ENCODE measurements at regions of chr13 and their contacts with region 1.

Region 1: DNA sequence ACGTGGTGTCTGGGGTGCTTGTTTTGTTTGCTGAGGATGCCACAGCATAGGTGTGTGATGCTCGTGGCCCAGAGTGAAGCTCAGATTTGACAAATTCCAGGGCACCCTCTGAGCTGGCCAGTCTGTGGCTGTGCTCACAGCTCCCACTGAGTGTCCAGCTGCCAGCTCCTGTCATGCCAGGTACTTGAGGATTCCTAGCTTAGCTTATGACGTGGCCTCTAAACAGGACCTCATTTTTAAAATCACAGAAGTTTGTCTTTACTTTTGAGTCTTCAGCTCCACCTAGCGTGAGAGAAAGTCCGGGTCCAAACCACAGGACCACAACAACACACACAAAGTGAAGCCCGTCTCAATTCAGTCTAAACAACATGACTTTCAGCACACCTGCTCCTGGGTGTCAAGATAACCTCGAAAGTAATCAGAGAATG is 117.3 kb downstream of the RAB20 start:
- DNase-seq: no peak
- ATAC-seq: peak; percentile 74
- H3K4me3 ChIP-seq: peak overlapping the region; percentile 30; the same call in 1 of the 2 replicates
- H3K27ac ChIP-seq: peak overlapping the region; percentile 45
- H3K4me1 ChIP-seq: peaks cover 41% of the 10 kb centered on the region
- H3K27me3 ChIP-seq: no peaks in the 10 kb centered on the region
- CTCF ChIP-seq: peak; percentile 44 to 60 (median 54)
- EP300 ChIP-seq: peak in 1 of 2 experiments; percentile 30; a peak in 1 of 4 replicates
- POLR2A ChIP-seq: no peak
- RAD21 ChIP-seq: peak; percentile 81

Region 2: GRCh38 chr13:109809216-109809932 is 634.9 kb before region 1 on chr13:
- CTCF ChIA-PET with region 1: no interaction called
- POLR2A ChIA-PET with region 1: no interaction called
- RAD21 ChIA-PET with region 1: no interaction called
- SMC1A ChIA-PET with region 1: no interaction called
- in situ Hi-C with region 1: no loop called
- intact Hi-C with region 1: no loop called
- DNase-seq: no peak
- ATAC-seq: no peak
- H3K4me3 ChIP-seq: no peak overlapping the region
- H3K27ac ChIP-seq: no peak overlapping the region
- H3K4me1 ChIP-seq: no peaks in the 10 kb centered on the region
- H3K27me3 ChIP-seq: no peaks in the 10 kb centered on the region
- CTCF ChIP-seq: no peak
- EP300 ChIP-seq: no peak
- POLR2A ChIP-seq: no peak
- RAD21 ChIP-seq: no peak

Region 3: GRCh38 chr13:110218581-110219201 is 225.5 kb before region 1 on chr13:
- CTCF ChIA-PET with region 1: interaction called, 138 read pairs
- POLR2A ChIA-PET with region 1: interaction called, 6 read pairs
- RAD21 ChIA-PET with region 1: interaction called, 66 read pairs
- SMC1A ChIA-PET with region 1: interaction called, 91 read pairs
- in situ Hi-C with region 1: loop called (anchors 5 kb)
- intact Hi-C with region 1: loop called (anchors 1 kb)
- DNase-seq: no peak
- ATAC-seq: no peak
- H3K4me3 ChIP-seq: no peak overlapping the region
- H3K27ac ChIP-seq: no peak overlapping the region
- H3K4me1 ChIP-seq: no peaks in the 10 kb centered on the region
- H3K27me3 ChIP-seq: peaks cover 0 to 3% of the 10 kb centered on the region in 2 experiments; a peak in 2 of 4 replicates
- CTCF ChIP-seq: no peak
- EP300 ChIP-seq: no peak
- POLR2A ChIP-seq: no peak
- RAD21 ChIP-seq: no peak

Region 4: DNA sequence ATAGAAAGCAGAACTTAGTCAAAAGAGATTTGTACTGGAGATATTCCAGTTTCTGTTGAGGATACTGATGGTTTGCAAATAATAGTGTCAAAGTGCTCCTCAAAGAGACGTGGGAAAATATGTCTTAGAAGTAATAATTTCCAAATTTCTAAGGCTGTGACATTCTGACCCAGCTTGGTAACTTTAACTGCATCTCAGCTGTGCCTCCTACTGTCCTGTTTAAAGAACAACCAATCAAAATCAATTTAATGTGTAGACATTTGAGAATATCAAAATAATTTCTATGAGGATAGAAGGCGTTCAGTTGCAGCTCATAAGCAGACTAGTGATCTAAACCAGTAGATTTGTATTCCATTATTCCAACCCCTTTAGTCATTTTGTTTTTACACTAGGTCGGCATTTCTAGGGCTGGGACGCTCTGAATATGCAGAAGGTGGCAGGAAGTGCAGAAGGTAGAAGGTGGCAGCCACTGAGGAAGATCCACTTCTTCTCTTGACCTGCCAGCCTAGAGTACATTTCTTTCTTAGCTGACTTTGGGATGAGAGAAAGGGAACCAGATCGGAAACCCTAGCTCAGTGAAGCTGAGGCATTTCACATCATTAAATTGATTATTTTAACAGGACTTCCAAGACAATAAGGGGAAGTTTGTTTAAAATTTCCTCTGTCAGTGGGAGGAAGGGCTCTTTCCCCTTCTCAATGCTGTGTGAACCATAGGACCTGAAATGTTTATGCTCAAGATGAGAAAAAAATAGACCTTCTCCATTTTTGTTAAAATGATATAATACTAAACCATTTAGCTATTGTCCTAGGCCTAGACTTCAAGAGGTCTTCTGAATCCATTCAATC is 204.7 kb before region 1 on chr13:
- CTCF ChIA-PET with region 1: interaction called, 15 read pairs
- POLR2A ChIA-PET with region 1: no interaction called
- RAD21 ChIA-PET with region 1: no interaction called
- SMC1A ChIA-PET with region 1: interaction called, 5 read pairs
- in situ Hi-C with region 1: no loop called
- intact Hi-C with region 1: no loop called
- DNase-seq: no peak
- ATAC-seq: no peak
- H3K4me3 ChIP-seq: no peak overlapping the region
- H3K27ac ChIP-seq: no peak overlapping the region
- H3K4me1 ChIP-seq: no peaks in the 10 kb centered on the region
- H3K27me3 ChIP-seq: peaks cover 4 to 5% of the 10 kb centered on the region in 2 experiments; a peak in 2 of 4 replicates
- CTCF ChIP-seq: no peak
- EP300 ChIP-seq: no peak
- POLR2A ChIP-seq: no peak
- RAD21 ChIP-seq: no peak

Region 5: GRCh38 chr13:110371550-110372465 is 72.4 kb before region 1 on chr13:
- CTCF ChIA-PET with region 1: interaction called, 7 read pairs
- POLR2A ChIA-PET with region 1: no interaction called
- RAD21 ChIA-PET with region 1: interaction called, 20 read pairs
- SMC1A ChIA-PET with region 1: interaction called, 4 read pairs
- in situ Hi-C with region 1: no loop called
- intact Hi-C with region 1: no loop called
- DNase-seq: peak; percentile 40
- ATAC-seq: peak; percentile 86
- H3K4me3 ChIP-seq: no peak overlapping the region
- H3K27ac ChIP-seq: no peak overlapping the region
- H3K4me1 ChIP-seq: no peaks in the 10 kb centered on the region
- H3K27me3 ChIP-seq: no peaks in the 10 kb centered on the region
- CTCF ChIP-seq: no peak
- EP300 ChIP-seq: peak; percentile 10 to 54; a peak in 2 of 4 replicates
- POLR2A ChIP-seq: no peak
- RAD21 ChIP-seq: no peak

Region 6: DNA sequence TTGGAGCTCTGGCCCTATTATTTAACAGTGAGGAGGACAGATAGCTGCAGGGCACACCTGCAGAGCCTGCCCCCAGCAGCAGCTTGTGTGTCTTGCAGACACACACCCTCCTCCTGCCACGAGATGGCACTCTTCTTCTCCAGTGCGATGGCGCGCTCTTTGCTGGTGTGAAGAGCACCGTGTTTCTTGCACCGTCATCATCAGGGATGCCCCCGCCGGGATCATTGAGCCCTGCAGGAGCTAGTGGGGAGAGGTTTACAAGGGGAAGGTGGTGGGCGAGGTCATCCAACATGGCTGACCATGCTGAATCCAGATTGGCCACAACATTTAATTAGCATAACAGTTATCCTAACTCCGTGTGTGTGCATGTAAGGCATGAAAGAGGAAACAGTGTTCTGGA is 11.7 kb after region 1 on chr13:
- CTCF ChIA-PET with region 1: interaction called, 37 read pairs
- POLR2A ChIA-PET with region 1: no interaction called
- RAD21 ChIA-PET with region 1: interaction called, 16 read pairs
- SMC1A ChIA-PET with region 1: interaction called, 17 read pairs
- in situ Hi-C with region 1: no loop called
- intact Hi-C with region 1: no loop called
- DNase-seq: no peak
- ATAC-seq: peak; percentile 99
- H3K4me3 ChIP-seq: 0 out of 2 replicates have a peak overlapping the region, but pooled peaks have one; percentile 18
- H3K27ac ChIP-seq: no peak overlapping the region
- H3K4me1 ChIP-seq: peaks cover 4% of the 10 kb centered on the region; the same call in 1 of the 2 replicates
- H3K27me3 ChIP-seq: no peaks in the 10 kb centered on the region
- CTCF ChIP-seq: peak; percentile 91 to 95 (median 95); a peak in 5 of 6 replicates
- EP300 ChIP-seq: no peak
- POLR2A ChIP-seq: no peak
- RAD21 ChIP-seq: peak; percentile 95

Region 7: GRCh38 chr13:110726726-110727125 is 282.5 kb after region 1 on chr13:
- CTCF ChIA-PET with region 1: no interaction called
- POLR2A ChIA-PET with region 1: no interaction called
- RAD21 ChIA-PET with region 1: no interaction called
- SMC1A ChIA-PET with region 1: no interaction called
- in situ Hi-C with region 1: no loop called
- intact Hi-C with region 1: no loop called
- DNase-seq: no peak
- ATAC-seq: peak; percentile 88
- H3K4me3 ChIP-seq: no peak overlapping the region
- H3K27ac ChIP-seq: peak overlapping the region; percentile 53
- H3K4me1 ChIP-seq: peaks cover 7% of the 10 kb centered on the region; the same call in 1 of the 2 replicates
- H3K27me3 ChIP-seq: no peaks in the 10 kb centered on the region
- CTCF ChIP-seq: no peak
- EP300 ChIP-seq: no peak
- POLR2A ChIP-seq: no peak; the same call in 1 of the 2 replicates
- RAD21 ChIP-seq: no peak

Region 8: DNA sequence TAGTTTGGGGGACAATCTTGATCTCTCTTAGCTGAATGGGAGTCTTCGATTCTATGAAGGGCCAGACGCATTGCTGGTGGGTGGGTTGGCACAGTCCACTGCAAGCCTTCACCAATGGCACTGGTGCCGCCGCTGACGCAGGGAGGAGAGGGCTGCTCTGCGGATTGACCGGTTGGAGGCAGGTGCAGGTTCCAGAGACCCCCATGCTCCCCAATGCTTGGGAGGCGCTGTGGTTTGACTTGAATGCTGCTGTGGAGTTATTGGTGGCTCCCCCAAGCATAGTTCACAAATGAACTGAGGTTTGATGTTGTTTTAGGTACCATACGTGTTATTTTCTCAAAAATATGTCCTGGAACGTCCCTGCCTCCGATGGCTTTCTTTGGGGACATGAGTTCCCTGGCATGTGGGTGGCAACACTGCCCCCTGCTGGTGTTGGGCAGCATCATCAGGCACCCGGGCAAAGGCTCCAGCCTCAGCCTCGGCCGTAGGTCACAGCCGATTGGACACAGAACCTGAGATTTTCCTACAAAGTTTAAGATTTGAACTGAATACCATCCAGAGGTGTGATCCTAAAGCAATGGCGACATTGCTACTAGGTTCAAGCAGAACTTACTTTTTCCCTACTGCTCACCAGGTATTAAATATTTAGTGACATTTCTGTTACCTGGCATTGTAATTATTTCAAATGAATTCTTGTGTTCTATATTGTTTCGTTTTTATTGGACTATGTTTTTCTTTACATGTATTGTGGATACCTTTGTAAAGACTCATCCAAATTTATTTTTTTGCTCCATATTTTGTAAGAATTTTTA is 375.2 kb after region 1 on chr13:
- CTCF ChIA-PET with region 1: interaction called, 7 read pairs
- POLR2A ChIA-PET with region 1: no interaction called
- RAD21 ChIA-PET with region 1: no interaction called
- SMC1A ChIA-PET with region 1: interaction called, 3 read pairs
- in situ Hi-C with region 1: loop called (anchors 5 kb)
- intact Hi-C with region 1: no loop called
- DNase-seq: peak; percentile 39
- ATAC-seq: peak; percentile 96
- H3K4me3 ChIP-seq: no peak overlapping the region
- H3K27ac ChIP-seq: no peak overlapping the region
- H3K4me1 ChIP-seq: 0 out of 2 replicates have a peak, but pooled peaks cover 5% of the 10 kb centered on the region
- H3K27me3 ChIP-seq: no peaks in the 10 kb centered on the region
- CTCF ChIP-seq: peak; percentile 96 to 97 (median 97)
- EP300 ChIP-seq: no peak
- POLR2A ChIP-seq: no peak
- RAD21 ChIP-seq: peak; percentile 90

Measured in GM12878 (cell line).